ENCODE measurements at regions of chr6 and their contacts with region 1.

Region 1: GRCh38 chr6:57048577-57048976 is 2.1 kb downstream of the KIAA1586 start:
- DNase-seq: no peak
- ATAC-seq: no peak
- H3K4me3 ChIP-seq: no peak overlapping the region
- H3K4me3 Mint-ChIP-seq: peak overlapping the region; percentile 46 to 84 (median 68)
- H3K27ac ChIP-seq: no peak overlapping the region
- H3K27ac Mint-ChIP-seq: peak overlapping the region in 6 of 9 donors; percentile 14 to 75 (median 58)
- H3K4me1 ChIP-seq: peaks cover 0 to 9% of the 10 kb centered on the region in 2 donors
- H3K4me1 Mint-ChIP-seq: peaks cover 21 to 41% (median 32%) of the 10 kb centered on the region in 7 donors
- H3K27me3 ChIP-seq: no peaks in the 10 kb centered on the region
- H3K27me3 Mint-ChIP-seq: peaks cover 0 to 24% (median 0%) of the 10 kb centered on the region in 5 donors

Region 2: DNA sequence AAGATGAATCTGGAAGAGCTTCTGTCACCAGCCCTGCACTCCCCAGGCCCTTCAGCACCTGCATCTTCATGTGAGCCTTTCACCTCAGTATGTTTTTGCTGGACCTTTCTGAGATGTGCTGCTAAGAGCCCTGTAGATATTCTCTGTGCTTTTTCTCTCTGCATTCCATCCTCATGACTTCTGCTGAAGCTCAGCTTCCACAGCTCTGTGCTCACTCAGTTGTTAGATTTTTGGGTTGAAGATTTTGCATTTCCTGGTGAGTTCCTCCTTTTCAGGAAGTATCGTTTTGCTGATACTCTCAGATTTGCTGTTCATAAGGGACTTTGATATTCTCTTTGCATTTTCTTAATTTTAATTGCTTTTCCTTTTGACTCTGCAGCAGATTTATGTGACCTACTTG is 16.2 kb after region 1 on chr6:
- CTCF ChIA-PET with region 1: no interaction called
- POLR2A ChIA-PET with region 1: interaction called, 4 read pairs
- intact Hi-C with region 1: loop called in 1 of 2 experiments (anchors 2 kb)
- DNase-seq: no peak
- ATAC-seq: no peak
- H3K4me3 ChIP-seq: no peak overlapping the region
- H3K4me3 Mint-ChIP-seq: no peak overlapping the region
- H3K27ac ChIP-seq: no peak overlapping the region
- H3K27ac Mint-ChIP-seq: peak overlapping the region in 1 of 9 donors; percentile 14
- H3K4me1 ChIP-seq: no peaks in the 10 kb centered on the region
- H3K4me1 Mint-ChIP-seq: peaks cover 0 to 8% (median 0%) of the 10 kb centered on the region in 7 donors
- H3K27me3 ChIP-seq: no peaks in the 10 kb centered on the region
- H3K27me3 Mint-ChIP-seq: no peaks in the 10 kb centered on the region